ENCODE measurements at regions of chr1 and their contacts with region 1.

Region 1: DNA sequence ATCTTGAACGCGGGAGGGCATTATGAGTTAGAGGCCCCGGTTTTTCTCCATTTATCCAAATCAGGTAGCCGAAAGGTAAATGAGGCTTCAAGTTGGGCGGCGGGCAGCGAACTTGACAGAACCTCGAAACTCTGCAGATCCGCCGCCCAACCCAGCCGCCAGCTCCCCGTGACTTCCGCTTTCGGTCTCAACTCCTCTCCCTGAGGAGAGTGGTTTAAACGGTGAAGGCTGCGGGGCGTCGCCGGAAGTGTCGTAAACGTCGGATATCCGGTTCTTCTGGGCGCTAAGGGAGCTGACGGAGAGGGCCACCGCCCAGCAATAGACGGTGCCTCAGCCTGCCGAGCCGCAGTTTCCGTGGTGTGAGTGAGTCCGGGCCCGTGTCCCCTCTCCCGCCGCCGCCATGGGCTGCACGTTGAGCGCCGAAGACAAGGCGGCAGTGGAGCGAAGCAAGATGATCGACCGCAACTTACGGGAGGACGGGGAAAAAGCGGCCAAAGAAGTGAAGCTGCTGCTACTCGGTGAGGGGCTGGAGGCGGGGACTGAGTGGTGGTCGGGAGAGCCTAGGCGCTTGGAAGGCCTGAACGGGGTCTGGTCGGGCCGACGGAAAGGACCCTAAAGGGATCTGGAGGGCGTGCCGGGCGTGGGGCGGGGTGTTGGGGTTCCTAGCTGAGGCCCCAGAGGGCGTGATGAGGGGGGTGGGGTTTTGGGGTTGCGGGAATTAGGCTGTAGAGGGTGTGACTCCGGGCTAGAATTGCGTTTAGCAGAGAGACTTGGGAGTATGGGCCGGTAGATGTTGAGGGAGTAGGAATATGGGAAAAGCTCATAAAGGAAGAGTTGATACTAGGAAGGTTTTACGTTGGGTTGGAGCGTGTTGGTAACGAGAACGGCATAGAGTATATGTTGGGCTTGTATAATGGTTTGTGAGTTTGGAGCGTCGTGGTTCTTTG is at the start of gene GNAI3:
- DNase-seq: peak; percentile 94 to 99 (median 96)
- H3K4me3 ChIP-seq: peak within 1 kb of the TSS; percentile 94 to 99
- H3K4me3 Mint-ChIP-seq: peak within 1 kb of the TSS; percentile 93 to 100 (median 98)
- H3K27ac ChIP-seq: peak within 1 kb of the TSS; percentile 97
- H3K27ac Mint-ChIP-seq: peak within 1 kb of the TSS; percentile 92 to 100 (median 99)
- H3K4me1 ChIP-seq: peaks cover 60% of the 10 kb centered on the region
- H3K4me1 Mint-ChIP-seq: peaks cover 41 to 65% (median 49%) of the 10 kb centered on the region in 4 donors
- H3K27me3 ChIP-seq: no peaks in the 10 kb centered on the region
- H3K27me3 Mint-ChIP-seq: no peaks in the 10 kb centered on the region
- total RNA-seq, gene GNAI3: 7.7 to 8.1 TPM

Region 2: GRCh38 chr1:109099938-109100773 is 448.4 kb before region 1 on chr1:
- CTCF ChIA-PET with region 1: interaction called, 3 read pairs
- POLR2A ChIA-PET with region 1: interaction called, 7 read pairs
- intact Hi-C with region 1: loop called (anchors 5 kb)
- DNase-seq: peak; percentile 96 to 98 (median 97)
- H3K4me3 ChIP-seq: peak overlapping the region; percentile 80 to 81
- H3K4me3 Mint-ChIP-seq: peak overlapping the region; percentile 91 to 100 (median 96)
- H3K27ac ChIP-seq: peak overlapping the region; percentile 80
- H3K27ac Mint-ChIP-seq: peak overlapping the region; percentile 90 to 99 (median 98)
- H3K4me1 ChIP-seq: peaks cover 15% of the 10 kb centered on the region
- H3K4me1 Mint-ChIP-seq: peaks cover 7 to 20% (median 16%) of the 10 kb centered on the region in 4 donors
- H3K27me3 ChIP-seq: no peaks in the 10 kb centered on the region
- H3K27me3 Mint-ChIP-seq: no peaks in the 10 kb centered on the region

Region 3: DNA sequence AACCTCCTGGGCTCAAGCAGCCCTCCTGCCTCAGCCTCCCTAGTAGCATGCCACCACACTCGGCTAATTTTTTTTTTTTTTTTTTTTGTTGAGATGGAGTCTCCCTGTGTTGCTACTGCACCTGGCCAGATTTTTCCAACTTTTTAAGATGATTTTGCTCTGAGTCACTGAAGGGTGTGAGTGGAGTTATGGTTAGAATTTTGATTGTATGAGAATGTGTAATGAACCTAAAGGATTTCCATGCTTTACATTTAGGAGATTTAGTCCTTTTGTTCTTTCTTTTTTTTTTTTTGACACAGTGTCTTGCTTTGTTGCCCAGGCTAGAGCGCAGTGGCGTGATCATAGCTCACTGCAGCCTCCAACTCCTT is 322.5 kb before region 1 on chr1:
- CTCF ChIA-PET with region 1: no interaction called
- POLR2A ChIA-PET with region 1: no interaction called
- intact Hi-C with region 1: no loop called
- DNase-seq: no peak
- H3K4me3 ChIP-seq: no peak overlapping the region
- H3K4me3 Mint-ChIP-seq: no peak overlapping the region
- H3K27ac ChIP-seq: no peak overlapping the region
- H3K27ac Mint-ChIP-seq: peak overlapping the region in 2 of 7 donors; percentile 6 to 73
- H3K4me1 ChIP-seq: peaks cover 6% of the 10 kb centered on the region
- H3K4me1 Mint-ChIP-seq: peaks cover 17 to 37% (median 21%) of the 10 kb centered on the region in 4 donors
- H3K27me3 ChIP-seq: no peaks in the 10 kb centered on the region
- H3K27me3 Mint-ChIP-seq: no peaks in the 10 kb centered on the region

Region 4: DNA sequence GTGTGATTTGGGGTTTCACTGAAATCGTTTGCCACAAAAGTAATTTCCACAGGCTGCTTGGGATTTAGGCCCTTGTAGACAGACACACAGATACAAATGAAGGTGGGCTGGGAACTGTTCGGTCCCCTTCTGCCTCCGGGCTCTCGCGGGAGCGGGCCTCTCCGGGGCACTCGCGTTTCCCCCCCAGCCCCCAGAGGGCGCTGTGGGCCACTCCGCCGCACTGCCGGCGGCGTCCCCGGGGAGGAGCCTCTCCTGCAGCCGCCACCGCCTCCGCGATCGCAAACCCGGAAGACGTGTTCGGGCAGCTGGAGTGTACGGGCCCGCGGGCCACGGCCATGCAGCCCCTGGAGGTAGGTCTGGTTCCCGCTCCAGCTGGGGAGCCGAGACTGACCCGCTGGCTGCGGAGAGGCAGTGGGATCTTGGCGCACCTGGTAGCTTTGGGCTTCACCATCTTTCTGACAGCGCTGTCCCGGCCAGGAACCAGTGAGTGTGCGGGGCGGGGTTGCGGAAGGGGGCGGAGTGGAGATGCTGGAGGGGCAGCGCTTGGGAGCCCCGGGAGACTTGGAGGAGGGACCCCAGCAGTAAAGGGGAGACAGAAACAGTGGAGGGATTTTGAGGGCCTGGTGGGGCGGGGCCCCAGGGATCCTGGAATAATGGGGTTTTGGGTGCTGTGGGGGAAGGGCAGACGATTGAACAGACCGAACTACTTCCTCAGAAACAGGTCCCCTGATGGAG is 54.6 kb before region 1 on chr1 and contains the start of gene CYB561D1:
- CTCF ChIA-PET with region 1: interaction called, 12 read pairs
- POLR2A ChIA-PET with region 1: interaction called, 4 read pairs
- intact Hi-C with region 1: no loop called
- DNase-seq: peak; percentile 87 to 95 (median 89)
- H3K4me3 ChIP-seq: peak within 1 kb of the TSS; percentile 91 to 97
- H3K4me3 Mint-ChIP-seq: peak within 1 kb of the TSS; percentile 94 to 97 (median 96)
- H3K27ac ChIP-seq: peak within 1 kb of the TSS; percentile 53
- H3K27ac Mint-ChIP-seq: peak within 1 kb of the TSS; percentile 86 to 95 (median 93)
- H3K4me1 ChIP-seq: peaks cover 57% of the 10 kb centered on the region
- H3K4me1 Mint-ChIP-seq: peaks cover 30 to 60% (median 46%) of the 10 kb centered on the region in 4 donors
- H3K27me3 ChIP-seq: no peaks in the 10 kb centered on the region
- H3K27me3 Mint-ChIP-seq: no peaks in the 10 kb centered on the region
- total RNA-seq, gene CYB561D1: 40.7 to 41.6 TPM

Region 5: GRCh38 chr1:109559995-109560394 is 11.4 kb after region 1 on chr1:
- CTCF ChIA-PET with region 1: interaction called, 12 read pairs
- POLR2A ChIA-PET with region 1: interaction called, 16 read pairs
- intact Hi-C with region 1: no loop called
- DNase-seq: no peak
- H3K4me3 ChIP-seq: no peak overlapping the region
- H3K4me3 Mint-ChIP-seq: peak overlapping the region in 4 of 8 donors; percentile 16 to 55 (median 41)
- H3K27ac ChIP-seq: no peak overlapping the region
- H3K27ac Mint-ChIP-seq: peak overlapping the region in 2 of 7 donors; percentile 10 to 59
- H3K4me1 ChIP-seq: peaks cover 83% of the 10 kb centered on the region
- H3K4me1 Mint-ChIP-seq: peaks cover 52 to 96% (median 73%) of the 10 kb centered on the region in 4 donors
- H3K27me3 ChIP-seq: no peaks in the 10 kb centered on the region
- H3K27me3 Mint-ChIP-seq: no peaks in the 10 kb centered on the region

Region 6: GRCh38 chr1:109592916-109593315 is 44.3 kb after region 1 on chr1:
- CTCF ChIA-PET with region 1: no interaction called
- POLR2A ChIA-PET with region 1: no interaction called
- intact Hi-C with region 1: no loop called
- DNase-seq: no peak
- H3K4me3 ChIP-seq: no peak overlapping the region
- H3K4me3 Mint-ChIP-seq: no peak overlapping the region
- H3K27ac ChIP-seq: no peak overlapping the region
- H3K27ac Mint-ChIP-seq: no peak overlapping the region
- H3K4me1 ChIP-seq: no peaks in the 10 kb centered on the region
- H3K4me1 Mint-ChIP-seq: no peaks in the 10 kb centered on the region
- H3K27me3 ChIP-seq: no peaks in the 10 kb centered on the region
- H3K27me3 Mint-ChIP-seq: no peaks in the 10 kb centered on the region

Region 7: GRCh38 chr1:109643385-109644230 is 95.0 kb after region 1 on chr1:
- CTCF ChIA-PET with region 1: interaction called, 314 read pairs
- POLR2A ChIA-PET with region 1: interaction called, 41 read pairs
- intact Hi-C with region 1: loop called (anchors 1 kb)
- DNase-seq: peak; percentile 75 to 83 (median 79)
- H3K4me3 ChIP-seq: no peak overlapping the region
- H3K4me3 Mint-ChIP-seq: no peak overlapping the region
- H3K27ac ChIP-seq: no peak overlapping the region
- H3K27ac Mint-ChIP-seq: peak overlapping the region in 1 of 7 donors; percentile 42
- H3K4me1 ChIP-seq: peaks cover 14% of the 10 kb centered on the region
- H3K4me1 Mint-ChIP-seq: peaks cover 4 to 14% (median 8%) of the 10 kb centered on the region in 4 donors
- H3K27me3 ChIP-seq: no peaks in the 10 kb centered on the region
- H3K27me3 Mint-ChIP-seq: peaks cover 2% of the 10 kb centered on the region in 2 donors

Region 8: DNA sequence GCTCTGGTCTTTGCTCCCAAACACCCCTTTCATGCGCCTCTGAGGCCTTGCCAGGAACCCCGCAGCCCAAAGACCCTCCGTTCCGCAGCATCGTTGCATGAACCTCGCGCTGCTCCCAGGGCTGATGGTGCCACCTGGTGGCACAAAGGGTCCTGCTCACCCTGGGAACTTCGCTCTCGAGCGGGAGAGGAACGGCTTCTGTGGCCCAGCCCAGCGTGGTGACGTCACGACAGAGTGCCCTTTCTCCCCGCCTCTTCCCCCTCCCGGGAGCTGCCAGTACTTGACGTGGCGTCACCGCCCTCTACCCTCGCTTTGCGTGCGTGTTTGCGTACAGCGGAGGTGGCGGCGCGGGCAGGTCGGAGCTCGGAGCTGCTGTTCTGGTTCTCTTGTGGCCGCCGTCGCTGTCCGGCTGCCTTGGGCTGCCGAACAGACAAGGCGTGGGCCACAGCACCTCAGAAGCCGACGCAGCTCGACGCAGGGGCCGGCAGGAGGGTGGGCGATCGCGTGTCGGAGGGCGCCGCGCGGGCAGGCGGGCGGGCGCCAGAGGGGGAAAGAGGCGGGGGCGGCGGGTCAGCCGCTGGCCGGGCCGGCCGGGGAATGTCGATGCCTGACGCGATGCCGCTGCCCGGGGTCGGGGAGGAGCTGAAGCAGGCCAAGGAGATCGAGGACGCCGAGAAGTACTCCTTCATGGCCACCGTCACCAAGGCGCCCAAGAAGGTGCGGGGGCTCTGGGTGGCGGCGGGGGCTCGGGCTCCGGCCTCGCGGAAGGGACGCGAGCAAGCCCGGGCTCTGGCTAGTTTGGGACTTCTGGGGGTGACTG is 436.1 kb after region 1 on chr1 and contains the start of gene AHCYL1:
- CTCF ChIA-PET with region 1: interaction called, 30 read pairs
- POLR2A ChIA-PET with region 1: interaction called, 40 read pairs
- intact Hi-C with region 1: loop called (anchors 1 kb)
- DNase-seq: peak; percentile 98 to 99 (median 99)
- H3K4me3 ChIP-seq: peak within 1 kb of the TSS; percentile 58 to 75
- H3K4me3 Mint-ChIP-seq: peak within 1 kb of the TSS; percentile 97 to 100 (median 99)
- H3K27ac ChIP-seq: peak within 1 kb of the TSS; percentile 82
- H3K27ac Mint-ChIP-seq: peak within 1 kb of the TSS; percentile 96 to 99 (median 99)
- H3K4me1 ChIP-seq: peaks cover 31% of the 10 kb centered on the region
- H3K4me1 Mint-ChIP-seq: peaks cover 25 to 48% (median 35%) of the 10 kb centered on the region in 4 donors
- H3K27me3 ChIP-seq: no peaks in the 10 kb centered on the region
- H3K27me3 Mint-ChIP-seq: no peaks in the 10 kb centered on the region
- total RNA-seq, gene AHCYL1: 44.2 to 45.1 TPM